HCT116 (cell line): ENCODE measurements at regions of chr9 and their contacts with region 1.

Region 1: GRCh38 chr9:35611230-35611797 is 6.3 kb downstream of the TESK1 start:
- DNase-seq: peak; percentile 13
- ATAC-seq: peak; percentile 93
- H3K4me3 ChIP-seq: no peak overlapping the region
- H3K27ac ChIP-seq: no peak overlapping the region
- H3K4me1 ChIP-seq: peaks cover 4 to 7% of the 10 kb centered on the region in 2 experiments; a peak in 3 of 4 replicates
- H3K27me3 ChIP-seq: no peaks in the 10 kb centered on the region
- CTCF ChIP-seq: peak in 2 of 3 experiments; percentile 77 to 88; a peak in 4 of 6 replicates
- POLR2A ChIP-seq: no peak
- RAD21 ChIP-seq: no peak

Region 2: DNA sequence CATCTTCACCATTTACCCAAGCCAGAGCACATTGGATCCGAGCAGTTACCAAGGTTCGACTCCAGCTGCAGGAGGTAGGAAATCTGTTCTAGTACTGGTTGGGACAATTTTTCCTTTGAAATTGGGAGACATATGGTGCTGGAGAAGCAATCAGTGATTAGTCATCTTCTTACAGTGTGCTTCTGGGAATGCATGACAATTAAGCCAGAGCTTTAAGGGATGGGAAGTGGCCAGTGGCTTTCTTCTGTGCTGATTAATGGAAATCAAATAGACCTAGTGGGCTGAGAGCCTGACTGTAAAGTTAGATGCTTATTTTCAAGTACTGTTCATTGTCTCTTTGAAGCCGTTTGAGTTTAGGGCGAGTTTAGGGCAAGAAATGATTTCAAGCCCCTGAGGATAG is 297.4 kb before region 1 on chr9:
- CTCF ChIA-PET with region 1: no interaction called
- POLR2A ChIA-PET with region 1: no interaction called
- RAD21 ChIA-PET with region 1: no interaction called
- intact Hi-C with region 1: no loop called
- DNase-seq: no peak
- ATAC-seq: no peak
- H3K4me3 ChIP-seq: no peak overlapping the region
- H3K27ac ChIP-seq: no peak overlapping the region
- H3K4me1 ChIP-seq: no peaks in the 10 kb centered on the region; a peak in 1 of 4 replicates
- H3K27me3 ChIP-seq: no peaks in the 10 kb centered on the region
- CTCF ChIP-seq: no peak
- POLR2A ChIP-seq: no peak
- RAD21 ChIP-seq: no peak

Region 3: DNA sequence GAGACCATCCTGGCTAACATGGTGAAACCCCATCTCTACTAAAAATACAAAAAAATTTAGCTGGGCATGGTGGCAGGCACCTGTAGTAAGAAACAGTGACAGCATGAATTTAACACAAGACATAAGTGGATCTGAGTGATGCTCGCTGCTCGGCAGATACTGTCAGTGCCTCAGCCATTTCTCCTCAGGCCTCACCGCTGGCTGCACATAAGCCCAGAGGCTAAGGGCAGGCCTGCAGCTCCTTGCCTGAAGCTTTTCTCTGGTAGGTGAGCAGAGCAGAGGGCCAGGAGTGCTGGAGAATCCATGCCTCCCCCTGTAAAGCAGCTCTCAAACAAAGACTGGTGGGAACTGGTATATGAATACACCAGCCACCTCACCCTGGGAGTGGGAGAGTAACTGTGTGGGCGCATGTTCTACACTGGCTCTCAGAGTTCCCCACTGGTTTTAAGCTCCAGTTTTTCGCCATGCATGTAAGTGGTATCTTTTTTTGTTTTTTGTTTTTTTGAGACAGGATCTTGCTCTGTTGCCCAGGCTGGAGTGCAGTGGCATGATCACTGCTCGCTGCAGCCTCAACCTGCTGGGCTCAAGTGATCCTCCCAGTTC is 17.2 kb after region 1 on chr9:
- CTCF ChIA-PET with region 1: interaction called, 12 read pairs
- POLR2A ChIA-PET with region 1: no interaction called
- RAD21 ChIA-PET with region 1: no interaction called
- intact Hi-C with region 1: no loop called
- DNase-seq: no peak
- ATAC-seq: no peak
- H3K4me3 ChIP-seq: no peak overlapping the region
- H3K27ac ChIP-seq: no peak overlapping the region
- H3K4me1 ChIP-seq: peaks cover 0 to 5% of the 10 kb centered on the region in 2 experiments; a peak in 1 of 4 replicates
- H3K27me3 ChIP-seq: no peaks in the 10 kb centered on the region
- CTCF ChIP-seq: no peak
- POLR2A ChIP-seq: no peak
- RAD21 ChIP-seq: no peak